ENCODE measurements at regions of chr2 and their contacts with region 1.

Region 1: GRCh38 chr2:230075988-230076631 is 7.4 kb upstream of the SLC16A14 start:
- DNase-seq: peak; percentile 42
- H3K4me3 ChIP-seq: no peak overlapping the region
- H3K27ac ChIP-seq: no peak overlapping the region
- H3K4me1 ChIP-seq: peaks cover 5% of the 10 kb centered on the region
- H3K27me3 ChIP-seq: peaks cover 0 to 5% of the 10 kb centered on the region in 2 experiments
- CTCF ChIP-seq: no peak
- POLR2A ChIP-seq: no peak

Region 2: DNA sequence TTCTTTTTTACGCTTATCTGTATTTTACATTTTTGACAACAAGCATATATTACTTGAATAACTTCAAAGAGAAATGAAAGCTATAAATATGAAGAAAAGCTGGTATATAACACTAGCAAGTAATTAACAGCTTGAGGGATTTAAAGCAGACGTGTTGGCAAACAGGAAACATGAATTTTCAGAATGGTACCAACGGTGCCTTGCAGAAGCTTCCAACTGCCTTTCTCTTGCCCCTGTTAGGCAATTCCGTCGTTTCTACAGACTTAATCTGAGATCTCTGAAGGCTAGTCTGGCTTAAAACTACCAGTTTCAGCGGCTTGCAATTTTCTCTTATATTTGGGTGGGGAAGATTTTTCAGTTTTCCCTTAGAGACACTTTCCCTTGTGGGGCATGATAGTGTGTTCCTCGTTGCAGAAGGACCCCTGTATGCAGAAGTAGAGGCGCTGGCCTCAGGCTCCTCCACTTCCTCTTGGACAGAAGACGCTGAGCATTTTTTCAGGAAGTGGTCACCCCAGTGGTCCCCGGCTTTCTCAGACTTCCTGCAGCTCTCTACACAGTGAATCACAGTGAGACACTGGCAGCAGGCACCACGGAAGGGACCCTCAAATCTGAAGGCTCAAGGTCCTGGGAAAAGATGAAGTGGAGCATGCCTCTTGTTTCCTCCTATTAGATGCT is 48.8 kb after region 1 on chr2:
- CTCF ChIA-PET with region 1: no interaction called
- POLR2A ChIA-PET with region 1: no interaction called
- dilution Hi-C with region 1: no loop called
- intact Hi-C with region 1: loop called (anchors 5 kb)
- DNase-seq: no peak
- H3K4me3 ChIP-seq: no peak overlapping the region
- H3K27ac ChIP-seq: no peak overlapping the region
- H3K4me1 ChIP-seq: no peaks in the 10 kb centered on the region
- H3K27me3 ChIP-seq: no peaks in the 10 kb centered on the region
- CTCF ChIP-seq: no peak
- POLR2A ChIP-seq: no peak

Measured in endothelial cell of umbilical vein (primary cell).